IMR-90 (cell line): ENCODE measurements at regions of chr1 and their contacts with region 1.

Region 1: GRCh38 chr1:178908358-178908757 is 37.5 kb upstream of the ANGPTL1 start:
- DNase-seq: peak; percentile 58
- ATAC-seq: peak; percentile 78
- H3K4me3 ChIP-seq: no peak overlapping the region
- H3K27ac ChIP-seq: no peak overlapping the region
- H3K4me1 ChIP-seq: peaks cover 1% of the 10 kb centered on the region; the same call in 1 of the 2 replicates
- H3K27me3 ChIP-seq: no peaks in the 10 kb centered on the region
- CTCF ChIP-seq: no peak
- POLR2A ChIP-seq: no peak
- RAD21 ChIP-seq: no peak

Region 2: DNA sequence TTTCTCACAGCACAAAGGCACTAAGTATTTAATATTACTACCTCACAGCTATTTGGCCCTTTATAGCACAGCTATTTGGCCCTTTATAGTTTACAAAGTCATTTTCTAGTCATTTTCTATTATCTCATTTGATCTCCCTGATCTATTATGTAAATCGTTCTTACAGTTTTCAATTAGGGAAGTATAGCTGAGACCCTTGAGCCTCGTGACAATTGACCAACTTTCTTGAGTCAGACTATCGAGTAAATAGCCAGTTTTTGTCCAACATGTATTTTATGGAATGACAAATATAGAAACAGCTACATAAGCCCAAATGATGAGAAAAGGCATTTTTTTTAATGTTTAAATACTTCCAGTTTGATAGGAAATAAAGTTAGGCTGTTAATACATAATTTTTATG is 30.5 kb before region 1 on chr1:
- CTCF ChIA-PET with region 1: no interaction called
- POLR2A ChIA-PET with region 1: no interaction called
- dilution Hi-C with region 1: no loop called
- in situ Hi-C with region 1: no loop called
- intact Hi-C with region 1: loop called (anchors 1 kb)
- DNase-seq: no peak
- ATAC-seq: no peak
- H3K4me3 ChIP-seq: no peak overlapping the region
- H3K27ac ChIP-seq: no peak overlapping the region
- H3K4me1 ChIP-seq: no peaks in the 10 kb centered on the region; the same call in 1 of the 2 replicates
- H3K27me3 ChIP-seq: no peaks in the 10 kb centered on the region
- CTCF ChIP-seq: no peak
- POLR2A ChIP-seq: no peak
- RAD21 ChIP-seq: no peak

Region 3: DNA sequence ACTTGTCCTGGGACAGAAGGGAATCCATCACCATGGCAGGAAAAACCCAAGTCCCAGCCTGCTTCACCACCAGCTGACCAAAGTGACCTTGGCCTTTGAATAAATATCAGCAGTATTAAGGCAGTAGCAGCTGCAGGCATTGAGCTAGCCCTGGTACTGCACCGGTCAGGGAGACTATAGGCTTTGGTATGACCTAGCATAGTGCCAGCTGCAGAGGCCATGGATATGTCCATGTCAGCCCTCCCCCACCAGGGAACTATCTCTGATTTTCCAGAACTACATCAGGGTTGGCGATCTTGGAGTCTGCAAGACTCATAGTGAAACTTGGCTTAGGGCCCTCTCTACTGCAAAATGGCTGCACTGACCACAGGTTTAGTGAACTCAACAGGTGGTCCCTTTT is 68.2 kb after region 1 on chr1:
- CTCF ChIA-PET with region 1: no interaction called
- POLR2A ChIA-PET with region 1: no interaction called
- dilution Hi-C with region 1: no loop called
- in situ Hi-C with region 1: no loop called
- intact Hi-C with region 1: no loop called
- DNase-seq: no peak
- ATAC-seq: no peak
- H3K4me3 ChIP-seq: no peak overlapping the region
- H3K27ac ChIP-seq: no peak overlapping the region
- H3K4me1 ChIP-seq: no peaks in the 10 kb centered on the region; the same call in 1 of the 2 replicates
- H3K27me3 ChIP-seq: peaks cover 2% of the 10 kb centered on the region; the same call in 1 of the 2 replicates
- CTCF ChIP-seq: no peak
- POLR2A ChIP-seq: no peak
- RAD21 ChIP-seq: no peak